K562 (cell line): ENCODE measurements at regions of chr11 and their contacts with region 1.

Region 1: GRCh38 chr11:65900125-65900898 is at the start of gene FOSL1:
- DNase-seq: peak; percentile 89 to 97 (median 92)
- ATAC-seq: peak; percentile 90
- H3K4me3 ChIP-seq: peak within 1 kb of the TSS; percentile 89
- H3K27ac ChIP-seq: peak within 1 kb of the TSS; percentile 100
- H3K4me1 ChIP-seq: peaks cover 42 to 70% of the 10 kb centered on the region in 2 experiments
- H3K27me3 ChIP-seq: no peaks in the 10 kb centered on the region
- CTCF ChIP-seq: no peak
- EP300 ChIP-seq: peak; percentile 39; the same call in 1 of the 2 replicates
- POLR2A ChIP-seq: peak; percentile 97
- RAD21 ChIP-seq: 0 out of 4 replicates have a peak, but pooled peaks of 1 of the 2 experiments have one; percentile 7
- polyA plus RNA-seq, gene FOSL1: 3.5 to 4.2 TPM

Region 2: DNA sequence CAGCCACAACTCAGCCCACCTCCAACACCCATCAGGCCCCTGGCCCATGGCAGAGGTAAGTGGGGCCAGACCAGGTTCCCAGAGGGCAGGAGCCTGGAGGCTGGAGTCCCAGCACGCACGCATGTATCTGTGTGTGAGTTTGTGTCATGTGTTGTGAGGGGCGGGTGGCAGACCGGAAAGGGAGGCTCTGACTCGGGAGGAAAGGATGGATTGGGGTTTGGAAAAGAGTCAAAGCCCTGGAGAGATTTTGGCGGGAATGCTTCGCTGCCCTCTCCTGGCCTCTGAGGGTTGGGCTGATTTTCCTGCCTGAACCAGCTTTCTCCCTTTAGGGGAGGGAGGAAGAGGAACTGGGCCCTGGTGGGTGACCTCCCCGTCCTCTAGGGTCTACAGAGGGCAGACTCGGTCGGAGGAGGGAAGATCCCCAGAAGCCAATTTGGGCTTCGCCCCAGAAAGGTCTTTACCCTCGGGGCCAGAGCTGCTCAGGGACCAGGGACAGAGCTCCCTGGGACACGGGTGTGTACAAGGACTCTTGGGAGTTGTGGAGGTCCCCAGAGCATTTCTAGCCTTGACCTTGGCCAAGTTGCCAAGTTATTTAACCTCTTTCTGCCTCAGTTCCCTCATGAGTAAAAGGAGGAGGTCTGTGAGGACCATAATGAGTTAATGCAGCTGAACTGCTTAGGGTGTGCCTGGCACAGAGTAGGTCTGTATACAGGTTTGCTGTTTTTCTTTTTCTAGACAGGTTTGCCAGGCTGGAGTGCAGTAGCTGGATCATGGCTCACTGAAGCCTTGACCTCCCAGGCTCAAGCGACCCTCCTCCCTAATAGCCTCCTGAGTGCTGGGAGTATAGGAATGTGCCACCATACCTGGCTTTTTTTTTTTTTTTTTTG is 11.6 kb after region 1 on chr11:
- CTCF ChIA-PET with region 1: no interaction called
- POLR2A ChIA-PET with region 1: interaction called, 73 read pairs
- in situ Hi-C with region 1: no loop called
- intact Hi-C with region 1: no loop called
- DNase-seq: peak; percentile 33 to 77 (median 48)
- ATAC-seq: peak; percentile 63
- H3K4me3 ChIP-seq: no peak overlapping the region
- H3K27ac ChIP-seq: peak overlapping the region; percentile 54; the same call in 2 of the 3 replicates
- H3K4me1 ChIP-seq: peaks cover 41 to 42% of the 10 kb centered on the region in 2 experiments
- H3K27me3 ChIP-seq: no peaks in the 10 kb centered on the region
- CTCF ChIP-seq: peak; percentile 55 to 76 (median 58)
- EP300 ChIP-seq: no peak
- POLR2A ChIP-seq: no peak
- RAD21 ChIP-seq: peak; percentile 43 to 74; a peak in 3 of 4 replicates

Region 3: GRCh38 chr11:65961232-65961901 is 61.1 kb after region 1 on chr11 and contains the start of gene SART1:
- CTCF ChIA-PET with region 1: no interaction called
- POLR2A ChIA-PET with region 1: interaction called, 17 read pairs
- in situ Hi-C with region 1: no loop called
- intact Hi-C with region 1: no loop called
- DNase-seq: peak; percentile 95 to 99 (median 97)
- ATAC-seq: peak; percentile 97
- H3K4me3 ChIP-seq: peak within 1 kb of the TSS; percentile 100
- H3K27ac ChIP-seq: peak within 1 kb of the TSS; percentile 96
- H3K4me1 ChIP-seq: peaks cover 12 to 39% of the 10 kb centered on the region in 2 experiments; a peak in 4 of 5 replicates
- H3K27me3 ChIP-seq: no peaks in the 10 kb centered on the region
- CTCF ChIP-seq: no peak
- EP300 ChIP-seq: peak; percentile 64; the same call in 1 of the 2 replicates
- POLR2A ChIP-seq: peak; percentile 96
- RAD21 ChIP-seq: no peak; a peak in 2 of 4 replicates
- polyA plus RNA-seq, gene SART1: 4.8 to 7.2 TPM

Region 4: GRCh38 chr11:66302656-66303055 is 402.3 kb after region 1 on chr11:
- CTCF ChIA-PET with region 1: no interaction called
- POLR2A ChIA-PET with region 1: no interaction called
- in situ Hi-C with region 1: no loop called
- intact Hi-C with region 1: no loop called
- DNase-seq: no peak
- ATAC-seq: no peak; the same call in 2 of the 3 replicates
- H3K4me3 ChIP-seq: no peak overlapping the region
- H3K27ac ChIP-seq: no peak overlapping the region
- H3K4me1 ChIP-seq: 0 out of 5 replicates have a peak, but pooled peaks cover 0 to 6% of the 10 kb centered on the region in 2 experiments
- H3K27me3 ChIP-seq: peaks cover 0 to 1% of the 10 kb centered on the region in 2 experiments; a peak in 1 of 5 replicates
- CTCF ChIP-seq: no peak
- EP300 ChIP-seq: no peak
- POLR2A ChIP-seq: no peak
- RAD21 ChIP-seq: no peak